ENCODE measurements at regions of chr5 and their contacts with region 1.

Region 1: DNA sequence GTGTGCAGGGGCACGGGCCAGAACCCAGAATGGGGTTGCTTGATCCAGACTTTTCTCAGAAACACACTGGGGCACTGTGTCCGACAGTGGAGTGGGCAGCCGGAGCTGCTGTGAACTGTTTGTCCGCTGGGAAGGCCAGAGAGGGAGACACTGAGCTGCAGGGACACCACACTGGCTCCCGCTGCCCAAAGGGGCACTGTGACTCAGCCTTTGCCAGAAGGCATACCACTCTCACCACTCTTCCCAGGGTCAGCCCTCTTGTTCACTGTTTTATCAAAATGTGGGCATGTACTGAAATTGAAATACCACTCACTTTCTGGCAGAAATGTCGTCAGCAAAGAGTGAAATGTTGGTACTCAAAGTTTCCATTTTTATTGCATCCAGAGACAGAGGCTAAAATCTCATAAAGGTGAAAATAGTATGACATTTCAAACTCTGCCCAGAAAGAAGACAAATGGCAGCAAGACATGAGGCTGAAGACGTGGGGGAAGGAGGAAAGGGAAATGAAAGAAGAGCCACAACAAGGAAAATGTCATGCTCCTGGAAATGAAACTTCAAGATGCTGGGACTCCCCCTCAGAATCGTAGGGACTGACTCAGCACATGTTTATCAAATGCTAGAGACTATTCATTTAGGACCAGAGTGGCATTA is 4.5 kb upstream of the IL7R start:
- DNase-seq: peak; percentile 82
- ATAC-seq: peak; percentile 47
- H3K4me3 Mint-ChIP-seq: peak overlapping the region; percentile 95
- H3K27ac Mint-ChIP-seq: peak overlapping the region; percentile 99
- H3K4me1 Mint-ChIP-seq: peaks cover 75% of the 10 kb centered on the region
- H3K27me3 Mint-ChIP-seq: no peaks in the 10 kb centered on the region
- CTCF ChIP-seq: no peak

Region 2: DNA sequence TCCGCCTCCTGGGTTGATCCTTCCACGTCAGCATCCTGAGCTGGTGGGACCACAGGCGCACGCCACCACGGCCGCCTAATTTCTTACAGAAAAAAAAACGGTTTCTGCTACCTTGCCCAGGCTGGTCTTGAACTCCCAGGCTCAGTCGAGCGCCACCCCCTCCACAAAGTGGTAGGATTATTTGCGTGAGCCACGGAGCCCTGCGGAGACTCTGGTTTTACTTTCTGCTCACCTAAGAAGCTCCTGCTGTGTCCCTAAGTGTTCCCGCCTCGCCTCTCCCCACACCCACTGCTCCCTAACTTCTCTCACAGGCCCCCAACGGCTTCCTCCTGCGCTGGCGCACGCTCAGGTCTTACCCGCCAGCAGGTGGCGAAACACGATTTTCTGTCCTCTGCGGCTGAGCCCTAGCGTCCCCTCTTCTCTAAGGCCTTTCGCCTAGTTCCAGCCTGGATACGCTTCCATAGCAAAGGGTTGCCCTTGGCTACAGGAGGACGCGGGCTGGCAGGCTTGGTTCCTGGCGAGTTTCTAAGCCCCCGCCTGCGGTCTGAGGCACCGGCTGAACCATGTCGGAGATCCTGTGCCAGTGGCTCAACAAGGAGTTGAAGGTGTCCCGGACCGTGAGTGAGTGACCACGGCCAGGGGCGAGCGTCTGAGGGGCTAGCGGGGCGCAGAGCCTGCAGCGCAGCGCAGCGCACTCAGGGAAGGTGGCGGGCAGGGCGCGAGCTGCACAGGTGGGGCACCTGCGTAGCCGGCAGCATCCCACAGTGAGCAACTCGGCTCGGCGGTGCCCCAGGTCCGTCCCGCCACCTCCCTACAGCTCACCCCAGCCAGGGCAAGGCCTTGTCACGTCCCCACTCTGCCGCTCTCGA is 234.5 kb before region 1 on chr5 and contains the start of gene SPEF2:
- CTCF ChIA-PET with region 1: interaction called, 4 read pairs
- POLR2A ChIA-PET with region 1: no interaction called
- intact Hi-C with region 1: loop called (anchors 5 kb)
- DNase-seq: peak; percentile 89
- ATAC-seq: peak; percentile 92
- H3K4me3 Mint-ChIP-seq: peak within 1 kb of the TSS; percentile 84
- H3K27ac Mint-ChIP-seq: peak within 1 kb of the TSS; percentile 97
- H3K4me1 Mint-ChIP-seq: peaks cover 25% of the 10 kb centered on the region
- H3K27me3 Mint-ChIP-seq: no peaks in the 10 kb centered on the region
- CTCF ChIP-seq: peak; percentile 84
- total RNA-seq, gene SPEF2: 8.4 to 9.9 TPM

Region 3: GRCh38 chr5:35707659-35708058 is 144.6 kb before region 1 on chr5:
- CTCF ChIA-PET with region 1: no interaction called
- POLR2A ChIA-PET with region 1: no interaction called
- intact Hi-C with region 1: no loop called
- DNase-seq: no peak
- ATAC-seq: peak; percentile 27
- H3K4me3 Mint-ChIP-seq: no peak overlapping the region
- H3K27ac Mint-ChIP-seq: no peak overlapping the region
- H3K4me1 Mint-ChIP-seq: peaks cover 12% of the 10 kb centered on the region
- H3K27me3 Mint-ChIP-seq: no peaks in the 10 kb centered on the region
- CTCF ChIP-seq: no peak

Region 4: GRCh38 chr5:35777358-35778087 is 74.7 kb before region 1 on chr5:
- CTCF ChIA-PET with region 1: interaction called, 59 read pairs
- POLR2A ChIA-PET with region 1: interaction called, 253 read pairs
- intact Hi-C with region 1: no loop called
- DNase-seq: peak; percentile 88
- ATAC-seq: peak; percentile 48
- H3K4me3 Mint-ChIP-seq: peak overlapping the region; percentile 3
- H3K27ac Mint-ChIP-seq: peak overlapping the region; percentile 91
- H3K4me1 Mint-ChIP-seq: peaks cover 67% of the 10 kb centered on the region
- H3K27me3 Mint-ChIP-seq: no peaks in the 10 kb centered on the region
- CTCF ChIP-seq: peak; percentile 94

Region 5: DNA sequence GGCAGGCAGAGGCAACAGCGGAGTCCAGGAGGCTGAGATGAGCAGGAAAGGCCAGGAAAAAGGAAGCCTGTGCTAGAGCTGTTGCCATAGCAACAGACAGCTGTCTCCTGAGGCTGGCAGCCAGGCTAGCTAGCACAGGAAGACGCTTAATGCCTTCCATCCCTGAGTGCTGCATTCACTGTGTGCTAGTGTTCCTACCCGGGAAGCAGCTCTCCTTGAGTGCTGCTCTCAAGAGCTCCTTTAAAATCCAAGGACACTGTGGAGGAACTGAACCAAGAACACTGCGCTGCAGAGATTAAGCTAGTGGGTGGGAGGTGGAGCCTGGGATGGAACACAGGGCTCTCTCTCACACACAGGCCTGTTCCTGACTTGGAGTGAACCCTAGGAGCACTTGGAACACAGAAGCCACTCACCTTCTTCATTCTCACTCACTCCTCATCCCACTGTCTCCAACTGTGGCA is 49.0 kb before region 1 on chr5:
- CTCF ChIA-PET with region 1: no interaction called
- POLR2A ChIA-PET with region 1: interaction called, 26 read pairs
- intact Hi-C with region 1: no loop called
- DNase-seq: no peak
- ATAC-seq: peak; percentile 43
- H3K4me3 Mint-ChIP-seq: no peak overlapping the region
- H3K27ac Mint-ChIP-seq: peak overlapping the region; percentile 69
- H3K4me1 Mint-ChIP-seq: peaks cover 65% of the 10 kb centered on the region
- H3K27me3 Mint-ChIP-seq: no peaks in the 10 kb centered on the region
- CTCF ChIP-seq: no peak

Region 6: GRCh38 chr5:35830587-35830986 is 21.6 kb before region 1 on chr5:
- CTCF ChIA-PET with region 1: interaction called, 10 read pairs
- POLR2A ChIA-PET with region 1: interaction called, 241 read pairs
- intact Hi-C with region 1: loop called (anchors 2 kb)
- DNase-seq: no peak
- ATAC-seq: peak; percentile 8
- H3K4me3 Mint-ChIP-seq: peak overlapping the region; percentile 19
- H3K27ac Mint-ChIP-seq: peak overlapping the region; percentile 91
- H3K4me1 Mint-ChIP-seq: peaks cover 88% of the 10 kb centered on the region
- H3K27me3 Mint-ChIP-seq: no peaks in the 10 kb centered on the region
- CTCF ChIP-seq: no peak

Region 7: DNA sequence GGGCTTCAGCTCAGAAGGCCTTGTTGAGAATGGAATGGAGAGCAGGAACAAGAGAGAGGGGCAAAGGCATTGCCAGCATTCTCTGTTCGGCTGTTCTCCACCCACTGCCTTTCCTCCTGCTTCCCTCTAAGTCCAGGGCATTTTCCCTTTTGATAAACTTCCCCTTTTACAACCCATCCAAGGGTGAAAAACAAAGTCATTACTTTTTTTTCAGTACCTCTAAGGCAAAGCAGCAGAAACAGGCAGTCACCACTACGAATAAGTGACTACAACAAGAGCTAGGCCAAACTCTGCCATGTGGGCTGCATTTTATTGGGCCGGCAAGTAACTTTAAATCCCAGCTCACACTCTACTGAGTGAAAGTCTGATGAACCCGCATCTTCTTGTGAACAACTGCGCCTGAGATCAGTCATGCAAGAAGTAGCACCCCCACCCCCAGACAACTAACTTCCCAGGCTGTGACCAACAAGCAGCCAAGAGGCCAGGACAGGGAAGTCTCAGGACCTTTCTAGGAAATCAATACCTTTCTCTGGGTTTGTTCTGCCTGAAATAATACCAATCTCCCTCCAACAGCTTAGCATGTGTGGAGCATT is 17.6 kb after region 1 on chr5:
- CTCF ChIA-PET with region 1: no interaction called
- POLR2A ChIA-PET with region 1: interaction called, 42 read pairs
- intact Hi-C with region 1: no loop called
- DNase-seq: no peak
- ATAC-seq: peak; percentile 28
- H3K4me3 Mint-ChIP-seq: no peak overlapping the region
- H3K27ac Mint-ChIP-seq: peak overlapping the region; percentile 71
- H3K4me1 Mint-ChIP-seq: peaks cover 82% of the 10 kb centered on the region
- H3K27me3 Mint-ChIP-seq: no peaks in the 10 kb centered on the region
- CTCF ChIP-seq: no peak

Region 8: GRCh38 chr5:35926389-35927051 is 74.3 kb after region 1 on chr5:
- CTCF ChIA-PET with region 1: interaction called, 101 read pairs
- POLR2A ChIA-PET with region 1: interaction called, 168 read pairs
- intact Hi-C with region 1: loop called (anchors 2 kb)
- DNase-seq: peak; percentile 79
- ATAC-seq: peak; percentile 63
- H3K4me3 Mint-ChIP-seq: peak overlapping the region; percentile 10
- H3K27ac Mint-ChIP-seq: no peak overlapping the region
- H3K4me1 Mint-ChIP-seq: peaks cover 38% of the 10 kb centered on the region
- H3K27me3 Mint-ChIP-seq: no peaks in the 10 kb centered on the region
- CTCF ChIP-seq: peak; percentile 94

Region 9: GRCh38 chr5:35971186-35971877 is 119.1 kb after region 1 on chr5:
- CTCF ChIA-PET with region 1: no interaction called
- POLR2A ChIA-PET with region 1: no interaction called
- intact Hi-C with region 1: no loop called
- DNase-seq: no peak
- ATAC-seq: no peak
- H3K4me3 Mint-ChIP-seq: no peak overlapping the region
- H3K27ac Mint-ChIP-seq: no peak overlapping the region
- H3K4me1 Mint-ChIP-seq: no peaks in the 10 kb centered on the region
- H3K27me3 Mint-ChIP-seq: peaks cover 9% of the 10 kb centered on the region
- CTCF ChIP-seq: no peak

Measured in activated CD8-positive, alpha-beta T cell treated with anti-CD3 and anti-CD28 coated beads for 36 hours (primary cell).